ENCODE measurements at regions of chrX and their contacts with region 1.

Region 1: GRCh38 chrX:109856974-109857373 is 123.9 kb upstream of the ACSL4 start:
- DNase-seq: no peak
- H3K4me3 ChIP-seq: no peak overlapping the region
- H3K27ac ChIP-seq: no peak overlapping the region
- H3K4me1 ChIP-seq: peaks cover 8% of the 10 kb centered on the region
- H3K27me3 ChIP-seq: no peaks in the 10 kb centered on the region
- CTCF ChIP-seq: peak; percentile 78 to 92

Region 2: GRCh38 chrX:109709129-109709631 is 147.8 kb before region 1 on chrX:
- CTCF ChIA-PET with region 1: interaction called, 22 read pairs
- dilution Hi-C with region 1: no loop called
- in situ Hi-C with region 1: loop called (anchors 5 to 10 kb)
- intact Hi-C with region 1: loop called (anchors 1 kb)
- DNase-seq: peak; percentile 66
- H3K4me3 ChIP-seq: no peak overlapping the region
- H3K27ac ChIP-seq: no peak overlapping the region
- H3K4me1 ChIP-seq: peaks cover 20% of the 10 kb centered on the region
- H3K27me3 ChIP-seq: no peaks in the 10 kb centered on the region
- CTCF ChIP-seq: no peak

Region 3: DNA sequence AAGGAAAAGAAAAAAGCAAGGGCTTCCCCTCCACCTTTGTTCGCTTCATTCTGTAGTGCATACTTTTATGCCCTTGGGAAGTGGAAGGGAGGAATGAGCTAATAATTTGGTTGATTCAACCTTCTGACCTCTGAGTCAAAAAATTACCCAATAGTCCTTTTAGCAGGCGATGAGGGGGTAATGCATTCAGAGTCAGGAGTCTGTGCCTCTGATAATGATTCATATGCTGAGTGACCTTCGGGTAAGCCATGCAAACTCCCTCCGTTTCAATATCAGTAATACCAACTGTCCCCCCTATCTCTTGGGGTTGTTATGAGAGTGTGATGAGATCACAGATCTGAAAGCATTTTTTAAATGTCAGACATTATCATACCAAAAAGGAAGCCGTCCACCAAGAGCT is 82.3 kb before region 1 on chrX:
- CTCF ChIA-PET with region 1: no interaction called
- dilution Hi-C with region 1: no loop called
- in situ Hi-C with region 1: no loop called
- intact Hi-C with region 1: loop called (anchors 5 kb)
- DNase-seq: peak; percentile 73
- H3K4me3 ChIP-seq: no peak overlapping the region
- H3K27ac ChIP-seq: no peak overlapping the region
- H3K4me1 ChIP-seq: peaks cover 3% of the 10 kb centered on the region
- H3K27me3 ChIP-seq: no peaks in the 10 kb centered on the region
- CTCF ChIP-seq: no peak

Region 4: DNA sequence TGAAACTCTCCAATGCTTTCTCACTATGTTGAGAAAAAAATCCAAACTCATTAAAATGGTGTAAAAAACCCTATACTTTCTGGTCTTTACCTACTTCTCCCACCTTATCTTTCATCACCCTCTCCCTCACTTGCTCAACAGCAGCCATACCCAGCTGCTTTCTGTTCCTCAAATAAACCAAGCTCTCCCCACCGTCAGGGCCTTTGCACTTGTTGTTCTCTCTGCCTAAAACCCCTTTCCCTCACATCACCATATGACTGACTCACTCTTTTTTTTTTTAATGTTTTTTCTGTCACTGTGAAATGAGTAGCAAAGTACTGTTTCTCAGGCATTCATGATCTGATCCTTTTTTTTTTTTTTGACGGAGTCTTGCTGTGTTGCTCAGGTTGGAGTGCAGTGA is 23.7 kb after region 1 on chrX:
- CTCF ChIA-PET with region 1: no interaction called
- dilution Hi-C with region 1: no loop called
- in situ Hi-C with region 1: no loop called
- intact Hi-C with region 1: no loop called
- DNase-seq: no peak
- H3K4me3 ChIP-seq: no peak overlapping the region
- H3K27ac ChIP-seq: no peak overlapping the region
- H3K4me1 ChIP-seq: no peaks in the 10 kb centered on the region
- H3K27me3 ChIP-seq: peaks cover 6% of the 10 kb centered on the region
- CTCF ChIP-seq: no peak

Region 5: GRCh38 chrX:109934434-109934833 is 77.5 kb after region 1 on chrX:
- CTCF ChIA-PET with region 1: no interaction called
- dilution Hi-C with region 1: no loop called
- in situ Hi-C with region 1: no loop called
- intact Hi-C with region 1: no loop called
- DNase-seq: no peak
- H3K4me3 ChIP-seq: no peak overlapping the region
- H3K27ac ChIP-seq: no peak overlapping the region
- H3K4me1 ChIP-seq: no peaks in the 10 kb centered on the region
- H3K27me3 ChIP-seq: no peaks in the 10 kb centered on the region
- CTCF ChIP-seq: no peak

Measured in mammary epithelial cell (primary cell).